CD14-positive monocyte (primary cell): ENCODE measurements at regions of chr5 and their contacts with region 1.

Region 1: GRCh38 chr5:118987988-118988865 is at the start of gene DTWD2:
- DNase-seq: peak; percentile 85 to 87 (median 87)
- H3K4me3 ChIP-seq: peak within 1 kb of the TSS; percentile 56 to 87 (median 80)
- H3K4me3 Mint-ChIP-seq: peak within 1 kb of the TSS; percentile 74 to 89
- H3K27ac ChIP-seq: peak within 1 kb of the TSS; percentile 41 to 89
- H3K27ac Mint-ChIP-seq: peak within 1 kb of the TSS in 6 of 7 donors; percentile 59 to 91 (median 73)
- H3K4me1 ChIP-seq: peaks cover 11 to 17% of the 10 kb centered on the region in 2 donors
- H3K4me1 Mint-ChIP-seq: peaks cover 14% of the 10 kb centered on the region
- H3K27me3 ChIP-seq: no peaks in the 10 kb centered on the region
- H3K27me3 Mint-ChIP-seq: no peaks in the 10 kb centered on the region
- CTCF ChIP-seq: peak; percentile 99
- polyA plus RNA-seq, gene DTWD2: 1.2 to 2.7 (median 2.5) TPM

Region 2: GRCh38 chr5:119255571-119256356 is 267.5 kb after region 1 on chr5:
- intact Hi-C with region 1: loop called in 1 of 2 experiments (anchors 10 kb)
- DNase-seq: peak; percentile 8 to 35 (median 35)
- H3K4me3 ChIP-seq: no peak overlapping the region
- H3K4me3 Mint-ChIP-seq: no peak overlapping the region
- H3K27ac ChIP-seq: no peak overlapping the region
- H3K27ac Mint-ChIP-seq: no peak overlapping the region
- H3K4me1 ChIP-seq: no peaks in the 10 kb centered on the region
- H3K4me1 Mint-ChIP-seq: no peaks in the 10 kb centered on the region
- H3K27me3 ChIP-seq: no peaks in the 10 kb centered on the region
- H3K27me3 Mint-ChIP-seq: peaks cover 0 to 2% (median 0%) of the 10 kb centered on the region in 3 donors
- CTCF ChIP-seq: peak; percentile 44

Region 3: GRCh38 chr5:119435436-119436132 is 447.4 kb after region 1 on chr5:
- intact Hi-C with region 1: loop called in 1 of 2 experiments (anchors 5 kb)
- DNase-seq: peak; percentile 69 to 80 (median 76)
- H3K4me3 ChIP-seq: no peak overlapping the region
- H3K4me3 Mint-ChIP-seq: peak overlapping the region in 1 of 2 donors; percentile 35
- H3K27ac ChIP-seq: no peak overlapping the region
- H3K27ac Mint-ChIP-seq: peak overlapping the region in 6 of 7 donors; percentile 25 to 74 (median 37)
- H3K4me1 ChIP-seq: peaks cover 24 to 30% of the 10 kb centered on the region in 2 donors
- H3K4me1 Mint-ChIP-seq: peaks cover 42% of the 10 kb centered on the region
- H3K27me3 ChIP-seq: no peaks in the 10 kb centered on the region
- H3K27me3 Mint-ChIP-seq: peaks cover 0 to 5% (median 0%) of the 10 kb centered on the region in 3 donors
- CTCF ChIP-seq: peak; percentile 85